WTC11 (cell line): ENCODE measurements at regions of chr5 and their contacts with region 1.

Region 1: DNA sequence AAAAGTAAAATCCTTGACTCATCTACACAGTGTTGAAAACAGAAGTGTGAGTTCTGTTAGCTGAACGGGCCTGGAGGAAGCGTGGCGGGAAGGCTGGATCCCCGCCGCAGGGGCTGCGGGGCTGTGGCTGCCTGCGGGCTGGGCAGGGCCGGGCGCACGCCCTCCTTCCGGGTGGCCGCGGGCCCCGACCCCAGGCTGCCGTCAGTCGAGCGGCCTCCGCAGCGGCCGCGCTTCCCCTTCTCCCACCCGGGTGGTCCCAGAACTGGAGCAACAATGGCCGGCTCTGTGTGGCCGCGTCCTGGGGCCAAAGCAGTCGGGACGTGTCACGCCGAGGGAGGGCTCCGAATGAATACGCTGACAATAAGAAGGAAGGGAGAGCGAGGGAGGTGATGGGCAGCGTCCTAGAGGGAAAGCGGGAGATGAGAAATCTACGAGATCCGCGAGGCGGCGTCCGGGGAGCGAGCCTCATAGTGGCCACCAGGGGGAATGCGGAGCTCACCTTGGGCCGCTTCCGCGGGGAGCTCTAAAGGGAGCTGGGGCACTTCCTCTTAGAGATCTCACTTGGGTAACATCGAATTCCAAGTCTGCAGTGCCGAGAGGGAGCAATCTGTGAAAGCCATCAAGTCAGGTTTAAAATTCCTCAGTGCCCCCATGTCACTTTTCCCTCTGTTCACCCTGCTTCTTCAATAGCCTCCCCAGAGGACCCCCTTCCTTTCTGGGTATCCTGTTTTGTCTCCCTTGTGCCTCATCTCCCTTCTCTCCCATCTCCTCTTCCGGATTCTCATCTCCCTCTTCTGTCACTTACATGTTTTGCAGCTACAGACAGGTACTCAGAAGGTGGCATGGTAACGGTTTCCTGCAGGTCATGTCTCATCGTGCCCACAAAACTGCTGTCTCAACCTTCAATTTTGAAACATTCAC is 83.9 kb downstream of the SLC1A3 start:
- DNase-seq: peak; percentile 92
- ATAC-seq: peak; percentile 79
- H3K4me3 Mint-ChIP-seq: peak overlapping the region; percentile 76
- H3K27ac Mint-ChIP-seq: peak overlapping the region; percentile 4
- H3K4me1 Mint-ChIP-seq: peaks cover 32% of the 10 kb centered on the region
- H3K27me3 Mint-ChIP-seq: peaks cover 35% of the 10 kb centered on the region
- CTCF ChIP-seq: peak; percentile 59

Region 2: DNA sequence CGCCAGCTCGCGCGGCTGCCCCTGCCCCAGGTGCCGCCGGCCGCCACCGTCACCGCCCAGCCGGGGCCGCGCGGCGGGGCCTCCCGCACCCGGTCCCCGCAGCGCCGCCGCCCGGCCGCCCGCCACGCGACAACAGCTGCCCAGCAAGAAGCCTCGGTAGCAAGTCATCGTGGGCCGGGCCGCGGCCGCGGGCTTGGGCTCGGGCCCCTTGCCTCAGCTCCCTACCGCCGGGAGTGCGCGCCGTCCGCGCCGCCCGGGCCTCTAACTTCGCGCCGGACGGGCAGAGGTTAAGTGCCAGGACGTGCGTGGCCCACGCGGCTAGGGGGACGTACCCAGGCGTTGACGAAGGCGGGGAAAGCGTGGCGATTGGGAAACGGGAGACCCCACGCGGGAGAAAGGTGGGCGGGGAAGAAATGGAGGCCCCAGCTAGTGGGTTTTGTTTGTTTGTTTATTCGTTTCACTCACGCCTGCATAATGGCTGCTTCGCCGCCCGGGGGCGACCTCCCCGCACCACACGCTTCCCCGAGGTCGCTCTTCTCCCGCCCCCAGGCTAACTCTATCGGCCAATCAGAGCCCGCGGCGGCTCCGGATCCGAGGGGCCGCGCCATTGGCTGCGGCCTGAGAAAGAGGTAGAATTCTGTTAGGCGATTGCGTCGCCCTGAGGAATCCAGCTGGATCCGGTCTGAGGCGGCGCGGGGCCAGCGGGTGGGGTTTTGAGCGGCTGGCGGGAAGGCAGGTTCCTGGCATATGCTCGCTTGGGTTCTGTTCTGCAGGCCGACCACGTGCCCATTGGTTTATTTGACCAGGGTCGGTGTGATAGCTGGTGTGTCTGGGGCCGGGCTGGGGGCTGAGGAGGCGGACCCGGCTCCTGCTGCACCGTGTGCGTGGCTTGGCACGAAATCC is 448.4 kb before region 1 on chr5 and contains the start of gene NADK2:
- CTCF ChIA-PET with region 1: interaction called, 10 read pairs
- POLR2A ChIA-PET with region 1: interaction called, 4 read pairs
- DNase-seq: peak; percentile 96
- ATAC-seq: peak; percentile 90
- H3K4me3 Mint-ChIP-seq: peak within 1 kb of the TSS; percentile 77
- H3K27ac Mint-ChIP-seq: peak within 1 kb of the TSS; percentile 96
- H3K4me1 Mint-ChIP-seq: peaks cover 25% of the 10 kb centered on the region
- H3K27me3 Mint-ChIP-seq: peaks cover 30% of the 10 kb centered on the region
- CTCF ChIP-seq: peak; percentile 51
- total RNA-seq, gene NADK2: 11.7 to 18.2 TPM (median 17.0 TPM) in 3 replicates

Region 3: DNA sequence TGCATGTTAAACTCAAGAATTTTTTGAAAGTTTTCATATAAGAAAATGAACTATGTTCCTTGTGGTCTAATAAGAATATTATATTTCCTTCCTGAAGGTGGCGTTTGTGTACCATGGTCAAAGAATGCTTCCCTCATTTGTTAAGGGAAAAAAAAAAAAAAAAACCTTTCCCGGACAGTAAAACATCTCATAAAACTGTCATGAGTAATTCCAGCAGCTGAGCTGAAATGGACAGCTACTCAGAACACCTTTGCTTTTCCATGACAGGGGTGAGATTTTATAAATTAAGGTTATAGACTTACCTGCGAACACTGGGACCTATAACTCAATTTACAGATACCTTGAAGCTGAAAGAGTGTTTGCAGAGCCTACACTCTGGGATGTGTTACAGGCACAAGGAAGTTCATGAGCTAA is 275.4 kb before region 1 on chr5:
- CTCF ChIA-PET with region 1: interaction called, 51 read pairs
- POLR2A ChIA-PET with region 1: no interaction called
- DNase-seq: no peak
- ATAC-seq: no peak
- H3K4me3 Mint-ChIP-seq: no peak overlapping the region
- H3K27ac Mint-ChIP-seq: no peak overlapping the region
- H3K4me1 Mint-ChIP-seq: peaks cover 38% of the 10 kb centered on the region
- H3K27me3 Mint-ChIP-seq: peaks cover 60% of the 10 kb centered on the region
- CTCF ChIP-seq: peak; percentile 22; the same call in 1 of the 2 replicates

Region 4: GRCh38 chr5:36602711-36603321 is 87.5 kb before region 1 on chr5:
- CTCF ChIA-PET with region 1: interaction called, 17 read pairs
- POLR2A ChIA-PET with region 1: interaction called, 3 read pairs
- DNase-seq: peak; percentile 58
- ATAC-seq: peak; percentile 74
- H3K4me3 Mint-ChIP-seq: peak overlapping the region; percentile 5; the same call in 1 of the 2 replicates
- H3K27ac Mint-ChIP-seq: peak overlapping the region; percentile 48
- H3K4me1 Mint-ChIP-seq: peaks cover 68% of the 10 kb centered on the region
- H3K27me3 Mint-ChIP-seq: no peaks in the 10 kb centered on the region
- CTCF ChIP-seq: no peak

Region 5: DNA sequence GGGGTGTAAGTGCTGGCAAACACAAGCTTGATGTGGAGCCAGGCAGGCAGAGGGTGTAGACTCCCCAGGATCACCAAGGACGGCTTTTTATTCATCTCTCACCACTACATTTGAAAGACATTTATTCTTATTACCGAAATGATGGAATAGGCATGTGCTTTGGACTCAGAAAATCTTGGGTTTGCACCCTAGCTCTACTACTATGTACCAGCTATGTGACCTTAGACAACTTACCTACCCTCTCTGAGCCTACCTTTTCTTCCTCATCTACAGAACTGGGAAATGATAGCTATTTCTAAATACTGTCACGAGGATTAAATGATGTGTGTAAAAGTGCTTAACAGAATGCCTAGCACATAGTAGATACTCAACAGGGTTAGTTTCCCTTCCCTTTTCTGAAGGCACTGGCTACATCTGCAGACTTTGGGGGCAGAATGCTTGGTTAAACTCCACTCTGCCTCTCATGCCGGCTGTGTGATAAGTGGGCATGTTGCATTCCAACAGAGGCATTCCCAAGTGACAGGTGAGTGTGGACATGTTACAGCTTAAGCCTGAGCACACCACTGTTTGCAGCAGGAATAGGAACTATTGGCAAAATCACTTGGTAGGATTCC is 10.9 kb after region 1 on chr5:
- CTCF ChIA-PET with region 1: interaction called, 19 read pairs
- POLR2A ChIA-PET with region 1: no interaction called
- DNase-seq: no peak
- ATAC-seq: no peak
- H3K4me3 Mint-ChIP-seq: no peak overlapping the region
- H3K27ac Mint-ChIP-seq: no peak overlapping the region
- H3K4me1 Mint-ChIP-seq: peaks cover 11% of the 10 kb centered on the region
- H3K27me3 Mint-ChIP-seq: peaks cover 11% of the 10 kb centered on the region
- CTCF ChIP-seq: no peak